ENCODE measurements at regions of chr4 and their contacts with region 1.

Region 1: GRCh38 chr4:168841000-168841671 is 168.9 kb downstream of the CBR4 start:
- DNase-seq: no peak
- H3K4me3 ChIP-seq: no peak overlapping the region
- H3K27ac ChIP-seq: peak overlapping the region; percentile 50 to 69
- H3K4me1 ChIP-seq: no peaks in the 10 kb centered on the region
- H3K27me3 ChIP-seq: no peaks in the 10 kb centered on the region
- CTCF ChIP-seq: no peak
- POLR2A ChIP-seq: no peak

Region 2: DNA sequence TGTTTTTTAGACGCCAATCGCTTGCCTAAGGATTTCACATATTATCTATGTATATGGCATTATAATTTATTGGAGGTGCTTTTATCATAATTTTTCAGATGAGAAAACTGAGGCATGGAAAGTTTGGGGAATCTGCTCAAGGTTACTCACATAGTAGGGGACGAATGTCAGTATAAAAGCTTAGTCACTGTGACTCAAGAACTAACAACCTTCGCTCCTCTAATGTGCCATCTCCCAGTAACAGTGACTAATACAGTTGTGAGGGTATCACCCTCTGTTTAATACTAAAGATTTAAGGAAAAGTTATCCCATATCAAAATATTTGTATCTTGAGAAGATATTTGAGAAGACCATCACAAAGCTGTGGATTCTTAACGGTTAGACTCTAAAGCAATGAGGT is 1253.8 kb before region 1 on chr4:
- intact Hi-C with region 1: no loop called
- DNase-seq: no peak
- H3K4me3 ChIP-seq: no peak overlapping the region
- H3K27ac ChIP-seq: no peak overlapping the region
- H3K4me1 ChIP-seq: no peaks in the 10 kb centered on the region
- H3K27me3 ChIP-seq: no peaks in the 10 kb centered on the region
- CTCF ChIP-seq: no peak
- POLR2A ChIP-seq: no peak

Region 3: DNA sequence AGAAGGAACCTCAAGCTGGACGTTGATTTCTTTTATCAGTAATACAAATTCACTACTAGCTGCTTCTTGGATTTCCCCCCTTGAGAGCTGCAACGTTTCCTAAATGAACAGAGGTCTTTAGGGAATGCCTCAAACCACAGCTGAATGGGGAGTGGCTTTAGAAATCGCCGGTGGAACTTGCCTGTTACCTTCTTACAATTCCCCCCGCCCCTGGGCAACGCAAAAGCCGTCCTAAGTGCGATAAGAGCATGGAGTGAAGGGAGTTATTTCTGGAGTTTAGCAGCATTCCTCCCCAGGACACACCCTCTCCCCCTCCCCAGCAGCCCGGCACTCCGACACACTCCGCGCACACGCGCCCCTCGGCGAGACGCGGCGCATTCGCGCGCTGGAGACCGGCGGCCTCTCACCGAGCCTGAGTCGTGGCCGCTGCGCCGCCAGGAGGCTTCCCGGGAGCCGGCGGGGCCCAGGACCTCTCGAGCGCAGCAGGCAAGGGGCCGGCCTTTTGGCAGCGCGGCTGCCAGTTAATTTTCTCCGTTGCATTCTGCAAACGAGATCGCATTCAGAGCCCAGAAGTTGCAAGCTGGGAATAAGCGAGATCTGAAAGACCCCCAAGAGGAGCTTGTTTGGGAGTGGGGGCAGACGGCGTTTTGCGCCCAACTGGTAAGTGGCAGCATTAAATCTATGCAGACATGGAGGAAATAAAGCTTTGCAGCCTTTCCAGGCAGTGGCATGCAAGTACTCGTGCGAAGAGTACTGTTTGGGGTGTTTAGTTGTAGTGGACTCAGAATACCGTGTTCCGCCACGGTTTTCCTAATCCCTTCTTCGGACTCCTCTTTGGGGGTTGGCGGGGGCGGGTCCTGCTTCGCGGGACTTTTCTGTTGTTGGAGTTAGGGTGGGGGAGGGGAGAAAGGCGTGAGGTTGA is 209.6 kb before region 1 on chr4:
- intact Hi-C with region 1: loop called (anchors 5 kb)
- DNase-seq: peak; percentile 34
- H3K4me3 ChIP-seq: peak overlapping the region; percentile 24 to 35
- H3K27ac ChIP-seq: peak overlapping the region; percentile 52 to 57
- H3K4me1 ChIP-seq: no peaks in the 10 kb centered on the region
- H3K27me3 ChIP-seq: no peaks in the 10 kb centered on the region
- CTCF ChIP-seq: peak in 2 of 4 experiments; percentile 36 to 48
- POLR2A ChIP-seq: no peak

Region 4: GRCh38 chr4:168710353-168710946 is 130.7 kb before region 1 on chr4:
- intact Hi-C with region 1: loop called (anchors 5 kb)
- DNase-seq: peak; percentile 46
- H3K4me3 ChIP-seq: no peak overlapping the region
- H3K27ac ChIP-seq: peak overlapping the region; percentile 9 to 58
- H3K4me1 ChIP-seq: no peaks in the 10 kb centered on the region
- H3K27me3 ChIP-seq: no peaks in the 10 kb centered on the region
- CTCF ChIP-seq: peak in 3 of 4 experiments; percentile 39 to 66 (median 61)
- POLR2A ChIP-seq: no peak